ENCODE measurements at regions of chr12 and their contacts with region 1.

Region 1: GRCh38 chr12:31369712-31370521 is 44.0 kb upstream of the SINHCAF start:
- DNase-seq: peak in 1 of 2 donors; percentile 68
- H3K4me3 ChIP-seq: peak overlapping the region; percentile 42 to 46
- H3K27ac ChIP-seq: peak overlapping the region in 1 of 2 donors; percentile 33
- H3K4me1 ChIP-seq: peaks cover 0 to 7% of the 10 kb centered on the region in 2 donors
- H3K27me3 ChIP-seq: no peaks in the 10 kb centered on the region
- CTCF ChIP-seq: no peak

Region 2: DNA sequence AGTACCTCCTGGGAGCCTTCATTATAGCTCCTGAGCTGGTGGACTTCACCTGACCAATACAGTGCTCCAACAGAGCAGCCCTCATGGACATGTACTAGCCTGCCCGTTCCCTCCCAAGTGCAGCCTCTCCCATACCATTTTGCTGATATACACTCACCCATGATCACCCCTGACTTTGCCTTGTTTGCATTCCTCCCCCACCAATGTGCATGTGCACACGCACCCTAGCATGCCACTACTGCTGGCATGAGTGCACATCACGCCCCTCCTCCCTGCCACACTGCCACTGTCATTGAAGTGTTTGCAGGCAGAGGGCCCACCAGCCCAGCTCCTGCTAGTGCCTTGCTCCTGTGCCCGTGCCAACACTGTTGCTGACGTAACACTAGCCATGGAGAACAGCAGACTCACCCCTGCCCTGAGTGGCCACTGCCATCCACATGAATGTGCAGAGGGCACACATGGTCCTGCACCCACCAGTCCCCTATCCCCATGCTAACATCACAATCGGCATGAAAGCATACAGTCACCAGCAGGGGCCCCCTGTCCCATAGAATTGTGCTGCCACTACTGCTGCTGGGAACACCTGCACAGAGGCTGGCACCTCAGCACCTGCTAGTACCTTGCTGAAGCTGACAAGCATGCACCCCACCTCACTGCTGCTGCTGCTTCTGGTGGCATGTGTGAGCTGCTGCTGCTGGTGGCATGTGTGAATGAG is 154.2 kb before region 1 on chr12:
- intact Hi-C with region 1: no loop called
- DNase-seq: no peak
- H3K4me3 ChIP-seq: no peak overlapping the region
- H3K27ac ChIP-seq: no peak overlapping the region
- H3K4me1 ChIP-seq: no peaks in the 10 kb centered on the region
- H3K27me3 ChIP-seq: no peaks in the 10 kb centered on the region
- CTCF ChIP-seq: no peak

Region 3: GRCh38 chr12:31325877-31326631 is 43.9 kb before region 1 on chr12 and contains the start of gene SINHCAF:
- intact Hi-C with region 1: loop called (anchors 2 kb)
- DNase-seq: peak; percentile 99 to 100
- H3K4me3 ChIP-seq: peak within 1 kb of the TSS; percentile 86 to 91
- H3K27ac ChIP-seq: peak within 1 kb of the TSS; percentile 81 to 84
- H3K4me1 ChIP-seq: no peaks in the 10 kb centered on the region
- H3K27me3 ChIP-seq: no peaks in the 10 kb centered on the region
- CTCF ChIP-seq: no peak
- total RNA-seq, gene SINHCAF: 10.9 TPM

Region 4: DNA sequence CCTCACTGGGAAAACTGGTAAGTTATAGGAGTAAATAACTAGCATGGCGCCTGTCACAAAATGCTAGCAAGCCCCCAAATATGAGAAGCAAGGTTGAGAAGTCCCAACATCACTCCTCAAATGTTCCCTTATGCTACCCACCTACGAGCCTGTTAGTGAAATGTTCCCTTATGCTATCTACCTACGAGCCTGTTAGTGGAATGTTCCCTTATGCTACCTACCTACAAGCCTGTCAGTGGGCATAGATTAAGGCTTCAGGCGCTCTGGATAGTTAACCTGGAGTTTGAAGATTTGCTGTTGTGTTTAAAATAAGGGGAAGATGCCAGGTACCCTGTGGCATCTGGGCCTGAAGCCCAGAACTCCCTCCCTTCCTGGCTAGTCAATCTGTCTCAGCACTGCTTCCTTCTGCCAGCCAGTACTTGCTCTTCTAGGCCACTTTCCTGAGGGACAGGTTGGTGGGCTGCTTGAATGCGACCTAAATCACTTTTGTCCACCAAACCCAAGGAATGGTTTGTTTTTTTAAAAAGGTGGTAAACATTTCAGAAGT is 23.2 kb after region 1 on chr12:
- intact Hi-C with region 1: no loop called
- DNase-seq: no peak
- H3K4me3 ChIP-seq: no peak overlapping the region
- H3K27ac ChIP-seq: no peak overlapping the region
- H3K4me1 ChIP-seq: no peaks in the 10 kb centered on the region
- H3K27me3 ChIP-seq: no peaks in the 10 kb centered on the region
- CTCF ChIP-seq: no peak

Measured in ascending aorta (tissue), 2 donors.